ENCODE measurements at regions of chr5 and their contacts with region 1.

Region 1: DNA sequence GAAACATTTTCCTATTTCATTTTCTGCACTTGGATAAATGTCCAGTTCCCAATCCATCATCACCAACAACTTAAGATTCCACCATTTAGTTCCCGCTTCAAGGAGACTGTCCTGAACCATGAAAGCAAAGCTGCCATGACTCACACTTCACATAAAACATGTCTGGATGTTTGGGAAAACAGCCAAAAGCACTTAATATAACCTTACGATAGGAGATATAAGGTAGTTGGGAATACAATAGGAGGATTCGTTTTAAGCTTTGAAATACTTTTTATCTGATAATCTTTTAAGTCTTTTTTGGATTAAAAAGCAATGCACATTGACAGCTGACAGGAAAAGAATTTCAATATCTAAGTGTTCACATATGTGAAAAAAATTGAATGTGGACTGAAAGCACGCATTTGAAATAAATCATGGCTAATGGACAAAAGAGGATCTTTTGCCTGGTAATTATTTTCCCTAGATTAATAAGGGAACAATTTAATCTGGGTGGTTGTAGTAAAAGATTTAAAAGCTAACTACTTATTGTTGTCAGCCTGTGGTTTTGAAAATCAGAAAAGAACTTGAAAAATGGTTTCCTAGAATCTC is 17.3 kb upstream of the TGFBI start:
- DNase-seq: no peak
- ATAC-seq: peak in 1 of 4 donors; percentile 49
- H3K4me3 ChIP-seq: no peak overlapping the region
- H3K27ac ChIP-seq: peak overlapping the region in 7 of 12 donors; percentile 10 to 90 (median 25)
- H3K4me1 ChIP-seq: peaks cover 0 to 56% (median 19%) of the 10 kb centered on the region in 12 donors
- H3K27me3 ChIP-seq: no peaks in the 10 kb centered on the region
- CTCF ChIP-seq: no peak
- POLR2A ChIP-seq: no peak

Region 2: GRCh38 chr5:135964670-135965320 is 46.7 kb before region 1 on chr5:
- intact Hi-C with region 1: loop called in 1 of 10 experiments (anchors 2 kb)
- DNase-seq: no peak
- ATAC-seq: peak in 1 of 4 donors; percentile 45
- H3K4me3 ChIP-seq: no peak overlapping the region
- H3K27ac ChIP-seq: no peak overlapping the region
- H3K4me1 ChIP-seq: peaks cover 0 to 5% (median 0%) of the 10 kb centered on the region in 12 donors
- H3K27me3 ChIP-seq: no peaks in the 10 kb centered on the region
- CTCF ChIP-seq: peak in 3 of 12 donors; percentile 6 to 37 (median 12)
- POLR2A ChIP-seq: no peak

Measured in heart left ventricle (tissue), 16 donors.